CD8-positive, alpha-beta T cell (primary cell): ENCODE measurements at regions of chr3 and their contacts with region 1.

Region 1: DNA sequence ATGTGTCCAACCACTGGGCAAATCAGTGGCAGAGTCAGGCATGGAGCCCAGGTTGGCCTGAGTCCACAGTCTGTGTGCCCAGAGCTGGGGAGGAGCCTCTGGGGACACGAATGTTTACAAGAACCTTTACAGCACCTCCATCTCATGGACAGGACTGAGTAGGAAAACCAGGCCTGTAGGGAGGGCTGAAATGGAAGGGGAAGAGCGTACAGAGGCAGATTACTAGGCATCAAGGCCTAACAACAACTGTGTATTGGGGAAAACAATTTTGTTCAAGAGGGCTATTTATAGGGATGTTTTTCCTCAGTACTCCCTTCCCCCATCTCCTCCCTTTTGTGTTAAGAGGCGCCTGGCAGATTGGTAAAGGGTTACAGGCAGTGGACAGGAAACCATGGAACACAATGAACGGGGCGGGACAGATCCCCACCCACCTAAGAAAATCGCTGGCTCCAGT is 15.1 kb upstream of the ARHGAP31 start:
- DNase-seq: no peak
- ATAC-seq: no peak
- H3K4me3 ChIP-seq: no peak overlapping the region
- H3K4me3 Mint-ChIP-seq: no peak overlapping the region
- H3K27ac ChIP-seq: no peak overlapping the region
- H3K27ac Mint-ChIP-seq: no peak overlapping the region
- H3K4me1 ChIP-seq: no peaks in the 10 kb centered on the region
- H3K4me1 Mint-ChIP-seq: peaks cover 4% of the 10 kb centered on the region
- H3K27me3 ChIP-seq: no peaks in the 10 kb centered on the region
- H3K27me3 Mint-ChIP-seq: no peaks in the 10 kb centered on the region
- CTCF ChIP-seq: no peak

Region 2: DNA sequence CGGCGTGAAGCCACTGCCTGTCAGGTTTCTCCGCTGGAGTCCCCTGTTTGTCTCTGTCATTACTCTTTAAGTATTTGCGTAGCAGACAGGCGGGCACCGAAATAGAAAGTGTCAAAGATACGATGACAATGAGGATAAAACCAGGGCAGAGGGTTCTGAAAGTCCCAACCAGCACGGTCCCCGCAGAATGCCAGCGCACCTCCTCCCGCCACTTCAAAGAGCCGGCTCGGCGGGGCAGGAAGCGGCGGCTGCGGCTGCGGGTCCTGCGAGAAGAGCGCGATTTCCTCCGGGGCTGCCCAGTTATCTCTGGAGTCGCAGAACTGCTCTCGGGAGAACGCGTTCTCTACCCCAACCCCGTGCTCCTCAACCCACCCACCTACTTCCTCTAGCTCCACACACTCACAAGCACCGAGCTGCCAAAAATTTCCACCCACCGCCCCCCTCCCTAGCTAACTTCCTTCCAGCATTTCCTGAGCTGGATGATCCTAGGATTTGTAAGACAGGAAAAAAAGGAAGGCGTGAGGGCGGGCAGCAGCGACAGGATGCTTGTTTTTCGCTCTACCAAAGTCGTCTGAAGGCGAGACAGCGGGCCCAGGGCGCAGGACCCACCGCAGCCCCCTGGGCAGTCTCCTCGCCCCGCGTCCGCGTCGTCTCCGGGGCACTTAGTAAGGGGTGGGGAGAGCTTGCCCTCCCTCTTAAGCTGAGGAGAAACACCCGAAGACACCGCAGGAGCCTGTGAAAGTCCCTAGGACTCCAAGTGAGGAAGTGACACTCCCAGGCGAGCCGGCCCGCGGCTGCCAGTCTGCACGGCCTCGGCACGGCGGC is 15.0 kb after region 1 on chr3 and contains the start of gene ARHGAP31:
- CTCF ChIA-PET with region 1: interaction called, 21 read pairs
- POLR2A ChIA-PET with region 1: interaction called, 3 read pairs
- intact Hi-C with region 1: loop called (anchors 1 to 2 kb)
- DNase-seq: peak; percentile 71 to 96 (median 86)
- ATAC-seq: peak; percentile 64
- H3K4me3 ChIP-seq: peak within 1 kb of the TSS; percentile 61 to 82
- H3K4me3 Mint-ChIP-seq: peak within 1 kb of the TSS; percentile 95
- H3K27ac ChIP-seq: peak within 1 kb of the TSS; percentile 58 to 84
- H3K27ac Mint-ChIP-seq: peak within 1 kb of the TSS; percentile 98
- H3K4me1 ChIP-seq: peaks cover 30% of the 10 kb centered on the region
- H3K4me1 Mint-ChIP-seq: peaks cover 55% of the 10 kb centered on the region
- H3K27me3 ChIP-seq: no peaks in the 10 kb centered on the region
- H3K27me3 Mint-ChIP-seq: no peaks in the 10 kb centered on the region
- CTCF ChIP-seq: no peak
- total RNA-seq, gene ARHGAP31: 1.00 to 1.1 TPM

Region 3: DNA sequence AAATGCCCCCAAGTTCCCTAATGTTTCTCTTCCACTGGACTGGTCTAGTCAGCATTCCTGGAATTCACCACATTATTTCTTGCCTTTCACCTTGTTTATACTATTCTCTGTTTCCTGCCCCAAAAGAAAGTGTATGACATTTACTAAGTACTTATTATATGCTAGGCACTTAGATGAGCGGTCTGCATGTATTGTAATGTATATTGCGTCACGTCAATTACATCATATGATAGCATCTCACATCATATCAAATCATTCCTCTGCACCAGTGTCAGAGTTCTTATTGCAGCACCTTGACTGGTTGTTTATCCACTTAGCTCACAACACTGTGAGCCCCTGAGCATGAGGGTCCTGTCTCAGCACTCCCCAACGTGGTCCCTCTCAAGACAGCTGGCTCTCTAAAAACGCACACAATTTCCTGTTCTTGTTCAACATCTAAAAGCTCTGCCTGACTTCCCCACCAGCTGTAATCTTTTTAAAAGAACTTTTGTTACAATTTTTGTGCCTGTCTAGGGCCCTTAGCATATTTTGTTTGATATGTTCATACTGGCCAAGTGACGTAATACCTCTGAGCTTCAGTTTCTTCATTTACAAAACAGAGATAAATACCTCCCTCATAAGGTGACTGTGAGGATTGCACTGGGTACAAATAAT is 73.8 kb after region 1 on chr3:
- CTCF ChIA-PET with region 1: interaction called, 49 read pairs
- POLR2A ChIA-PET with region 1: no interaction called
- intact Hi-C with region 1: loop called (anchors 1 kb)
- DNase-seq: peak in 3 of 9 experiments; percentile 20 to 76 (median 61)
- ATAC-seq: peak; percentile 80
- H3K4me3 ChIP-seq: no peak overlapping the region
- H3K4me3 Mint-ChIP-seq: no peak overlapping the region
- H3K27ac ChIP-seq: no peak overlapping the region
- H3K27ac Mint-ChIP-seq: peak overlapping the region; percentile 8
- H3K4me1 ChIP-seq: peaks cover 20% of the 10 kb centered on the region
- H3K4me1 Mint-ChIP-seq: peaks cover 20% of the 10 kb centered on the region
- H3K27me3 ChIP-seq: no peaks in the 10 kb centered on the region
- H3K27me3 Mint-ChIP-seq: no peaks in the 10 kb centered on the region
- CTCF ChIP-seq: peak; percentile 63

Region 4: DNA sequence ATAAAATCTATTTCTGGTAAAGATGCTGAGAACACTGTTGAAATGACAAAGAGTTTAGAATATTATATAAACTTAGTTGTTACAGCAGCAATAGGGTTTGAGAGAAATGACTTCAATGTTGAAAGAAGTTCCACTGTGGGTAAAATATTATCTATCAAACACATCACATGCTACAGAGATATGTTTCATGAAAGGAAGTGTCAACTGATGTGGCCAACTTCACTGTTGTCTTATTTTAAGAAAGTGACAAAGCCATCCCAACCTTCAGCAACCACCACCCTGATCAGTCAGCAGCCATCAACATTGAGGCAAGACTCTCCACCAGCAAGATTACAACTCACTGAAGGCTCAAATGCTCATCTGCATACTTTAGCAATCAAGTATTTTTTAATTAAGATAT is 164.1 kb after region 1 on chr3:
- CTCF ChIA-PET with region 1: interaction called, 5 read pairs
- POLR2A ChIA-PET with region 1: no interaction called
- intact Hi-C with region 1: loop called in 1 of 2 experiments (anchors 5 kb)
- DNase-seq: no peak
- ATAC-seq: no peak
- H3K4me3 ChIP-seq: no peak overlapping the region
- H3K4me3 Mint-ChIP-seq: no peak overlapping the region
- H3K27ac ChIP-seq: no peak overlapping the region
- H3K27ac Mint-ChIP-seq: no peak overlapping the region
- H3K4me1 ChIP-seq: no peaks in the 10 kb centered on the region
- H3K4me1 Mint-ChIP-seq: peaks cover 5% of the 10 kb centered on the region
- H3K27me3 ChIP-seq: no peaks in the 10 kb centered on the region
- H3K27me3 Mint-ChIP-seq: no peaks in the 10 kb centered on the region
- CTCF ChIP-seq: no peak

Region 5: DNA sequence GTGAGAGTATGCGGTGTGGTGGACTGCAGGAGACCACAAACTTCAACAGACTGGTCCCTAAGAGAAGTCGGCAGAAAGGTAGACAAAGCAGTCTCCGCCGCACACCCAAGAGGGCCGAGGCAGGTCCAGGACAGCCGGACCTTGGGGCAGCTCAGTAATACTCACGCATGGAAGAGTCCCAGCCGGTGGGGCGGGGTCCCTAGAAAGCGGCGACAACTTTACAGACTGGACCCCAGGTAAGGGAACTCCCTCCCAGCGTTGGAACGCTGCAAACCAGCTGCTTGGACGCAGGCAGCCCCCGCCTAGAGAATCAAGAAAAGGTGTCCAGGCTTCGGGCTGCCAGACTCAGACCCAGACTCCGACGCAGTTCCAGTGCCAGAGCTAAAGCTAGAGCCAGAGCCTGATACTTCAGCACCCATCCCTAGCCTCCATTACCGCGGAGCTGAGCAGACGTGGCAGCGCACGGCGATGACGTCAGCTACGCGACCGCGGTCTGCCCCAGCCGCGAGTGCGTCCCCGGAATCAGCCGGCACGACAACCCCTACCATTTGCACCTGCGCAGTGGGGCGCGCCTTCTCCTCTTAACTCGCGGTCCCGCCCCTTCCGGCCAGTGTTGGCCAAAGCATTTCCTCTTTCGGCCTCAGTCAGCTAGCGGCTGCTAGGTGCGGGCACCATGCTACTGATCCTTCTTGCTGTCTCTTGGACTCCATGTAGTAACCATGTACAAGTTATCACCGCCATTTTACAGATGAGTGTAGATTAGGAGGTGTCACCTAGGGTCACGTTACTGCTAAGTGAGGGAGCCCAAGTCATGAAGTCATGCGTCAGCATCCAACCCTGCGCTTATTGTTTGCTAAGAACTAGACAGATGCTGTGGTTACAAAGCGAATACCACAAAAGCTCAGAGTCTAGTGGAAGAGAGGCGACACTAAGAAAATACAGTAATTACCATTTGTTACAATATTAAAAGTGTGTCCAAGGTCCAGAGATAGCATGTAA is 184.3 kb after region 1 on chr3 and contains the start of gene TMEM39A:
- CTCF ChIA-PET with region 1: interaction called, 5 read pairs
- POLR2A ChIA-PET with region 1: no interaction called
- intact Hi-C with region 1: loop called in 1 of 2 experiments (anchors 5 kb)
- DNase-seq: peak; percentile 98 to 100 (median 99)
- ATAC-seq: peak; percentile 86
- H3K4me3 ChIP-seq: peak within 1 kb of the TSS; percentile 93 to 94
- H3K4me3 Mint-ChIP-seq: peak within 1 kb of the TSS; percentile 93
- H3K27ac ChIP-seq: peak within 1 kb of the TSS; percentile 85 to 97
- H3K27ac Mint-ChIP-seq: peak within 1 kb of the TSS; percentile 96
- H3K4me1 ChIP-seq: peaks cover 19% of the 10 kb centered on the region
- H3K4me1 Mint-ChIP-seq: peaks cover 44% of the 10 kb centered on the region
- H3K27me3 ChIP-seq: no peaks in the 10 kb centered on the region
- H3K27me3 Mint-ChIP-seq: no peaks in the 10 kb centered on the region
- CTCF ChIP-seq: no peak
- total RNA-seq, gene TMEM39A: 67.8 to 68.0 TPM

Region 6: GRCh38 chr3:119498186-119498987 is 219.3 kb after region 1 on chr3 and contains the start of gene TIMMDC1:
- CTCF ChIA-PET with region 1: interaction called, 3 read pairs
- POLR2A ChIA-PET with region 1: no interaction called
- intact Hi-C with region 1: loop called in 1 of 2 experiments (anchors 1 kb)
- DNase-seq: peak; percentile 93 to 99 (median 98)
- ATAC-seq: peak; percentile 96
- H3K4me3 ChIP-seq: peak within 1 kb of the TSS; percentile 81 to 87
- H3K4me3 Mint-ChIP-seq: peak within 1 kb of the TSS; percentile 100
- H3K27ac ChIP-seq: peak within 1 kb of the TSS; percentile 92 to 95
- H3K27ac Mint-ChIP-seq: peak within 1 kb of the TSS; percentile 100
- H3K4me1 ChIP-seq: peaks cover 25% of the 10 kb centered on the region
- H3K4me1 Mint-ChIP-seq: peaks cover 40% of the 10 kb centered on the region
- H3K27me3 ChIP-seq: no peaks in the 10 kb centered on the region
- H3K27me3 Mint-ChIP-seq: no peaks in the 10 kb centered on the region
- CTCF ChIP-seq: no peak
- total RNA-seq, gene TIMMDC1: 12.1 to 16.8 TPM